Endothelial cell of umbilical vein (primary cell): ENCODE measurements at regions of chr9 and their contacts with region 1.

Region 1: GRCh38 chr9:114587385-114588202 is at the start of gene ATP6V1G1:
- DNase-seq: peak; percentile 99
- H3K4me3 ChIP-seq: peak within 1 kb of the TSS; percentile 24 to 79 (median 73)
- H3K27ac ChIP-seq: peak within 1 kb of the TSS; percentile 66
- H3K4me1 ChIP-seq: peaks cover 23% of the 10 kb centered on the region
- H3K27me3 ChIP-seq: no peaks in the 10 kb centered on the region
- CTCF ChIP-seq: peak in 1 of 2 donors; percentile 11
- POLR2A ChIP-seq: peak; percentile 91
- total RNA-seq, gene ATP6V1G1: 78.9 and 82.0 TPM in 2 replicates

Region 2: GRCh38 chr9:114397848-114398605 is 189.6 kb before region 1 on chr9:
- CTCF ChIA-PET with region 1: no interaction called
- POLR2A ChIA-PET with region 1: no interaction called
- dilution Hi-C with region 1: no loop called
- intact Hi-C with region 1: loop called (anchors 1 kb)
- DNase-seq: peak; percentile 91
- H3K4me3 ChIP-seq: peak overlapping the region; percentile 38 to 54 (median 54)
- H3K27ac ChIP-seq: peak overlapping the region; percentile 32
- H3K4me1 ChIP-seq: no peaks in the 10 kb centered on the region
- H3K27me3 ChIP-seq: no peaks in the 10 kb centered on the region
- CTCF ChIP-seq: no peak
- POLR2A ChIP-seq: no peak

Region 3: DNA sequence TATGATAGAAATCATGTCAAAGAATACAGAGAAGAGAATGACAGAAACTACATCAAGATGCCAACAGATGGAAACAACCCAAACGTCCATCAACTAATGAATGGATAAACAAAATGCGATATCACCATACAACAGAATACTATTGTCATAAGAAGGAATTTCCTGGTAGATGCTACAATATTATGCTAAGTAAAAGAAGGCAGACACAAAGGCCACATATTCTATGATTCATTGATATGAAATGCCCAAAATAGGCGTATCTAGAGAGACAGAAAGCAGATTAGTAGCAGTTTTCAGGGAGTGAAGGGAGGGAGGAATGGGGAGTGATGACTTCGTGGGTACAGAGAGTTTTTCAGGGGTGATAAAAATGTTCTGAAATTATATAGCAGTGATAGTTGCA is 141.6 kb before region 1 on chr9:
- CTCF ChIA-PET with region 1: no interaction called
- POLR2A ChIA-PET with region 1: no interaction called
- dilution Hi-C with region 1: no loop called
- intact Hi-C with region 1: loop called (anchors 1 kb)
- DNase-seq: peak; percentile 63
- H3K4me3 ChIP-seq: no peak overlapping the region
- H3K27ac ChIP-seq: peak overlapping the region; percentile 46
- H3K4me1 ChIP-seq: peaks cover 16% of the 10 kb centered on the region
- H3K27me3 ChIP-seq: no peaks in the 10 kb centered on the region
- CTCF ChIP-seq: no peak
- POLR2A ChIP-seq: no peak

Region 4: GRCh38 chr9:114487607-114488300 is 99.8 kb before region 1 on chr9:
- CTCF ChIA-PET with region 1: interaction called, 6 read pairs
- POLR2A ChIA-PET with region 1: interaction called, 3 read pairs
- dilution Hi-C with region 1: no loop called
- intact Hi-C with region 1: loop called (anchors 2 kb)
- DNase-seq: peak; percentile 70
- H3K4me3 ChIP-seq: no peak overlapping the region
- H3K27ac ChIP-seq: no peak overlapping the region
- H3K4me1 ChIP-seq: no peaks in the 10 kb centered on the region
- H3K27me3 ChIP-seq: peaks cover 2% of the 10 kb centered on the region in 2 experiments
- CTCF ChIP-seq: peak; percentile 80 to 90
- POLR2A ChIP-seq: no peak

Region 5: DNA sequence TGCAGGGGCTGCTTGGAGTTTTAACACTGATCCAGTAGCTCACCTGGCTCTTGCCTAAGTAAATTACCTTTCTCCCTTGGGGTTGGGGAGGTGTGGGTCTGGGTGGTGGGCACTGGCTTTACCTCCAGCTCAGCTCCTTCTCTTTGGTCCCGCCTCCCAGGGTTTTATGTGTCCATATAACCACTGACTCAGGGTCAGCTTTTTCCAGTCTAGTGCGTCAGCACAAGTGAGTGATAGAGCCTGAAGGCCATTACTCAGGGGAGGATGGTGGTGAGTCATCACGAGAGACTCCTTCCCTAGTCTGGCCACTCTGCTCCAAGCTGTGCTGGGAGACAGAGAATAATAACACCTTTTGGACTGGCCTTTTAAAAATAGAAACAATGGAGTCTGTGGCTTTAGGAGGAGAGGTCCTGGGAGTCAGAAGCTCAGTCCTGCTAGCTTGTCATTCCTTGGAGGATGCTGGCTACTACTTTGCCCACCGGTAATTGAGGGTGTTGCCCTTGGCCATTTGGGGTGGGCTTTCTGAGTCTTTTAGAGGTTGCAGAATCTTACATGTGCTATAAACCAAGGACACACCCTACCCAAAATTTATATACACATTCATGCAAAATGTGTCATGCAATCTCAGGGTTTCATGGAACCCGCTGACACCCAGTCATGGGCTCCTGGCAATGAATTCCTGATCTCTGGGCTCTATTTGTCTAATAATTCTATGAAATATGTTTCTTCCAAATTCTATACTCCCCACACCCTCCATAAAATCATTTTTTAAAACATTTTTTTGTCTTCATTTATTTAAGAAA is 35.5 kb before region 1 on chr9:
- CTCF ChIA-PET with region 1: interaction called, 7 read pairs
- POLR2A ChIA-PET with region 1: interaction called, 5 read pairs
- dilution Hi-C with region 1: no loop called
- intact Hi-C with region 1: loop called (anchors 1 kb)
- DNase-seq: peak; percentile 86
- H3K4me3 ChIP-seq: no peak overlapping the region
- H3K27ac ChIP-seq: peak overlapping the region; percentile 23
- H3K4me1 ChIP-seq: peaks cover 4% of the 10 kb centered on the region
- H3K27me3 ChIP-seq: no peaks in the 10 kb centered on the region
- CTCF ChIP-seq: no peak
- POLR2A ChIP-seq: no peak

Region 6: DNA sequence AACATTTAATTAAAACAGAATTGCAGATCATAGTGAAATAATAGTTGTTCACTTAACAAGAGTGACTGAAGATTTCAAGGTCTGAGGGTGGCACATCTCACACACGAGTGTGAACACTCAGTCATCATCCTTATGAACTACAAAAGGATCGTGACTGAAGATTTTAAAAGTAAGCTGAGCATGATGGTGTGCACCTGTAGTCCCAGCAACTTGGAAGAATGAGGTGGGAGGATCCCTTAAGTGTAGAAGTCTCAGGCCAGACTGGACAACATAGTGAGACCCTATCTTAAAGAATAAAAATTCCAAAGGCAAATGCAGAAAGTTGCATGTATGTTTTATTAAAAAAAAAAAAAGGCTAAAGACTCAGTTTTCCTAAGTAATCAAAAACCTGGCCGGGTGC is 22.4 kb before region 1 on chr9:
- CTCF ChIA-PET with region 1: no interaction called
- POLR2A ChIA-PET with region 1: no interaction called
- dilution Hi-C with region 1: no loop called
- intact Hi-C with region 1: no loop called
- DNase-seq: no peak
- H3K4me3 ChIP-seq: no peak overlapping the region
- H3K27ac ChIP-seq: no peak overlapping the region
- H3K4me1 ChIP-seq: no peaks in the 10 kb centered on the region
- H3K27me3 ChIP-seq: peaks cover 0 to 12% of the 10 kb centered on the region in 2 experiments
- CTCF ChIP-seq: no peak
- POLR2A ChIP-seq: no peak

Region 7: GRCh38 chr9:114611516-114612271 is 24.1 kb after region 1 on chr9:
- CTCF ChIA-PET with region 1: interaction called, 17 read pairs
- POLR2A ChIA-PET with region 1: interaction called, 5 read pairs
- dilution Hi-C with region 1: no loop called
- intact Hi-C with region 1: loop called (anchors 1 kb)
- DNase-seq: peak; percentile 57
- H3K4me3 ChIP-seq: peak overlapping the region; percentile 2 to 35 (median 22)
- H3K27ac ChIP-seq: no peak overlapping the region
- H3K4me1 ChIP-seq: peaks cover 10% of the 10 kb centered on the region
- H3K27me3 ChIP-seq: no peaks in the 10 kb centered on the region
- CTCF ChIP-seq: no peak
- POLR2A ChIP-seq: no peak